HEK293T (cell line): ENCODE measurements at regions of chr1 and their contacts with region 1.

Region 1: GRCh38 chr1:10507111-10507879 is 32.5 kb downstream of the PEX14 start:
- DNase-seq: peak; percentile 76

Region 2: GRCh38 chr1:10494754-10495474 is 12.4 kb before region 1 on chr1:
- CTCF ChIA-PET with region 1: interaction called, 19 read pairs
- POLR2A ChIA-PET with region 1: interaction called, 4 read pairs
- DNase-seq: peak; percentile 84

Region 3: DNA sequence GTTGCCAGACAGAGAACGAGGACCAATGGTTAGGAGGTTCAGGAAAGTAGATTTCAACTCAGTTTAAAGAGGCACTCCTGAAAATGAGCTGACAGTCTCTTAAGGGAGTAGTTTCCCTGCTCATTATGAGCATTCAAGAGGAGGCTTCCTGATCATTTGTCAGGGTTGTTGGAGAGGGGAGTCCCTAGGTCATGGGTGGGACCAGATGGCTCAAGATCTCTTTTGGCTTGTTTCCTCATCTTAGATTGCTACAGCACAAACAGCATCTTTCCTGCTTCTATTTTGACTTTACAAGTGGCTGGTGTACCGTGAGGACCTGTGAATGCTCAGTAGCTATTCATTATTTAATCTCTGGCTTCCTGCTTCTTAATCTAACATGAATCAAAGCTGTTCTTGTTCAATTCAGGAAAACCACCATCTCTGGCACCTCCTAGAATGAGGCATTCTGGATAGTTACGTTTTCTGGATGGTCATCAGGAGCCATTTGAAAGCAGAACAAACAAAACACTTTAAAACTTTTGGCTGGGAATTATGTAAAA is 15.1 kb after region 1 on chr1:
- CTCF ChIA-PET with region 1: interaction called, 12 read pairs
- POLR2A ChIA-PET with region 1: no interaction called
- DNase-seq: no peak